BJ (cell line): ENCODE measurements at regions of chr11 and their contacts with region 1.

Region 1: DNA sequence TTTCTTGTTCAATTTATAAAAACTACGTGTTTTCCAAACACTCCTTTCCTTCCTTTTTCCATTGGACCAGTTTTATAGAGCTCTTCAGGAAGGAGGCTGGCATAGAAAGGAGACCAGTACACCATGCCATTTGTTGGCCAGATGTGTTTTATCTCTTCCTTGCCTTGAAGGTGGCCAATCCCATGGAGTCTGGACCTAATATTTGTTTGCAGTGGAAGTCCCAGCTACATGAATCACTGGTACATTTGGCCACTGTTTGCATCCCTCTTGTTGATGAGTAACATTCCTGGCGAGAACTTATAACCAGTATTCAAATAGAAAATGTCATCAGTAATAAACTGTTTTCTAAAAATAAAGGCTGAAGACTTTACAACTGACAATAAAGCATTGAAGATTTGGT is 110.2 kb downstream of the ANO3 start:
- DNase-seq: peak; percentile 61
- H3K4me3 ChIP-seq: no peak overlapping the region
- H3K27me3 ChIP-seq: no peaks in the 10 kb centered on the region
- CTCF ChIP-seq: no peak

Region 2: DNA sequence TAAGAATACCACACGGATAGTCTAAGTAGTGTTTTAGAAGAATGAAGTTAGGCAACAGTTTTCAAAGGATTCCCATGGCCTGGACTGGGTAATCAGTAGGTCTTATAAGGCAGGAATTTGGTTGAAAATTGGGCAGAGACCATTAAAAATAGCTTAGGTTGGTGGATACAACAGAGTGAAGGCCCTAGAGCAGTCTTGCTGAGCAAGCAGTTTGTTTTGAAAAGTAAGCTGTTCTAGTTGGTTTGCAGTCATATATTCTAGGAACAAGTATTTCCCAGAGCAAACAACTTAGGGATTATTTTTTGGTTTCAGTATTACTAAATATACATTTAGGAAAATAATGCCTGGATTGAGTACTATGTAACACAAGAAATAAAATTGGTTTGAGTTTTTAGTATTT is 65.1 kb after region 1 on chr11:
- CTCF ChIA-PET with region 1: no interaction called
- POLR2A ChIA-PET with region 1: interaction called, 21 read pairs
- DNase-seq: no peak
- H3K4me3 ChIP-seq: no peak overlapping the region
- H3K27me3 ChIP-seq: peaks cover 2% of the 10 kb centered on the region; the same call in 1 of the 2 replicates
- CTCF ChIP-seq: no peak

Region 3: DNA sequence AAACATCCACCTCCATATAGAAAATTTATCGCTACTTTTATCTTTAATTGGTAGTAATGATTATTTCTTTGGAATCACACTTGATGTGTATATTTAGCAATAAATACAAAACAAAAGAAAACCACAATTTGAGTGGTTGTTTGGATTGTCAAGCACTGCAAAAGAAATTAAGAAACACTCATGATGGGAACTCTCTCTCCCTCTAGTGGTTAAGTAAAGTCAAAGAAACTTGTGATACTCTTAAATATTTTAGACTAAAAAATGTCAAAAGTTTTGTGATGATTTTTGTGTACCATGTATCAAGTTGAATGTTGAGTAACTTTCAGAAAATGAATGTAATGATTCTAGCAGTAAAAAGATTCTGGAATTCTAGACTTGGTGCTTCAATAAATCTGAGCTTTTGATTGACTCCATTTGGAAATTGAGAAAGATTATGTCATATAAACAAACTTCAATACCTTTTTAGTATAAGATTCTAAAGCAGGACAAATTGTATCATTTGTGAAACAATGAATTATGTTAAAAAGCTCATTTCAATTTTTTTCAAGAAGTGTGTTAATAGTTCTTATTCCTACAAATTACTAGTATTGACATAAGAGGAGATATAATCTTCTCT is 109.2 kb after region 1 on chr11:
- CTCF ChIA-PET with region 1: no interaction called
- POLR2A ChIA-PET with region 1: no interaction called
- DNase-seq: no peak
- H3K4me3 ChIP-seq: no peak overlapping the region
- H3K27me3 ChIP-seq: no peaks in the 10 kb centered on the region
- CTCF ChIP-seq: peak; percentile 38